Sigmoid colon (tissue), 7 donors: ENCODE measurements at regions of chr12 and their contacts with region 1.

Region 1: GRCh38 chr12:69595689-69596088 is 10.4 kb downstream of the CCT2 start:
- DNase-seq: no peak
- H3K4me3 ChIP-seq: no peak overlapping the region
- H3K27ac ChIP-seq: no peak overlapping the region
- H3K4me1 ChIP-seq: no peaks in the 10 kb centered on the region
- H3K27me3 ChIP-seq: no peaks in the 10 kb centered on the region
- CTCF ChIP-seq: no peak
- EP300 ChIP-seq: no peak
- POLR2A ChIP-seq: no peak

Region 2: DNA sequence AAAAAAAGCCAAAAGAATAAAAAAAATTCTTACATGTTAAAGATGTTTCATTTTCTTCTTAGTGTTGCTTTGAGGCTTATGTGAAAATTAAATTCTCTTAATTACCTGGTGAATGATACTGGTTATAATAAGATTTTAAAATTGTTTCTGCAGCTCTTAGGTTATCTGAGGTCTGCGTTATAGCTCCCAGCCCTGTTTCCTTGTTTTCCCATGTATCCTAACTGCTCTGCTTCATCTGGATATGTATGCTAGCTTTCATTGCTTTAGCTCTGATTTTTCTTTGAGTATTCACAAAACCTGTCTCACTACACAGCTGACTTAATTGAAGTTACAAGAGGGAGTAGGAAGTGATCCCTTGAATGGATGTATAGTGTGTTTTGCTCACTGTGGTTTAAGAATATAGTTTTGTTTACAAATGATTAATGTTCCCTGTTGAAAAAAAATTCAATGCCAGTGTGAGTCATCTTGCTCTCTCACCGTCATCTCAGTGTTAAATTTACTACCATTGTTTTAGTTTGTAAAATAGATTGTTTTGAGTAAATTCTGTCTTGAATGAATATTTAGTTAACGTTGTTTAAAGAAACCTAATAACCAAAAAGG is 329.6 kb before region 1 on chr12:
- intact Hi-C with region 1: loop called (anchors 10 kb)
- DNase-seq: no peak
- H3K4me3 ChIP-seq: no peak overlapping the region
- H3K27ac ChIP-seq: no peak overlapping the region
- H3K4me1 ChIP-seq: peaks cover 0 to 9% (median 0%) of the 10 kb centered on the region in 4 donors
- H3K27me3 ChIP-seq: no peaks in the 10 kb centered on the region
- CTCF ChIP-seq: no peak
- EP300 ChIP-seq: no peak
- POLR2A ChIP-seq: no peak

Region 3: GRCh38 chr12:69309461-69309860 is 286.2 kb before region 1 on chr12:
- intact Hi-C with region 1: no loop called
- DNase-seq: no peak
- H3K4me3 ChIP-seq: no peak overlapping the region
- H3K27ac ChIP-seq: no peak overlapping the region
- H3K4me1 ChIP-seq: no peaks in the 10 kb centered on the region
- H3K27me3 ChIP-seq: no peaks in the 10 kb centered on the region
- CTCF ChIP-seq: no peak
- EP300 ChIP-seq: no peak
- POLR2A ChIP-seq: no peak

Region 4: GRCh38 chr12:69442894-69443293 is 152.8 kb before region 1 on chr12:
- intact Hi-C with region 1: no loop called
- DNase-seq: no peak
- H3K4me3 ChIP-seq: no peak overlapping the region
- H3K27ac ChIP-seq: no peak overlapping the region
- H3K4me1 ChIP-seq: no peaks in the 10 kb centered on the region
- H3K27me3 ChIP-seq: no peaks in the 10 kb centered on the region
- CTCF ChIP-seq: no peak
- EP300 ChIP-seq: no peak
- POLR2A ChIP-seq: no peak

Region 5: GRCh38 chr12:69570545-69571399 is 24.9 kb before region 1 on chr12:
- intact Hi-C with region 1: no loop called
- DNase-seq: peak; percentile 68
- H3K4me3 ChIP-seq: no peak overlapping the region
- H3K27ac ChIP-seq: no peak overlapping the region
- H3K4me1 ChIP-seq: no peaks in the 10 kb centered on the region
- H3K27me3 ChIP-seq: no peaks in the 10 kb centered on the region
- CTCF ChIP-seq: peak; percentile 47 to 77 (median 68)
- EP300 ChIP-seq: no peak
- POLR2A ChIP-seq: no peak

Region 6: GRCh38 chr12:69623970-69624369 is 28.3 kb after region 1 on chr12:
- intact Hi-C with region 1: no loop called
- DNase-seq: no peak
- H3K4me3 ChIP-seq: no peak overlapping the region
- H3K27ac ChIP-seq: no peak overlapping the region
- H3K4me1 ChIP-seq: no peaks in the 10 kb centered on the region
- H3K27me3 ChIP-seq: no peaks in the 10 kb centered on the region
- CTCF ChIP-seq: no peak
- EP300 ChIP-seq: no peak
- POLR2A ChIP-seq: no peak